ENCODE measurements at regions of chr6 and their contacts with region 1.

Region 1: GRCh38 chr6:125153391-125154117 is at the start of gene TPD52L1:
- DNase-seq: peak; percentile 60
- ATAC-seq: peak; percentile 92
- H3K4me3 ChIP-seq: peak within 1 kb of the TSS; percentile 59
- H3K27ac ChIP-seq: no peak within 1 kb of the TSS
- H3K4me1 ChIP-seq: peaks cover 4% of the 10 kb centered on the region
- H3K27me3 ChIP-seq: no peaks in the 10 kb centered on the region
- CTCF ChIP-seq: peak; percentile 66
- POLR2A ChIP-seq: no peak
- RAD21 ChIP-seq: peak; percentile 64
- total RNA-seq, gene TPD52L1: 10.2 and 10.8 TPM in 2 replicates

Region 2: DNA sequence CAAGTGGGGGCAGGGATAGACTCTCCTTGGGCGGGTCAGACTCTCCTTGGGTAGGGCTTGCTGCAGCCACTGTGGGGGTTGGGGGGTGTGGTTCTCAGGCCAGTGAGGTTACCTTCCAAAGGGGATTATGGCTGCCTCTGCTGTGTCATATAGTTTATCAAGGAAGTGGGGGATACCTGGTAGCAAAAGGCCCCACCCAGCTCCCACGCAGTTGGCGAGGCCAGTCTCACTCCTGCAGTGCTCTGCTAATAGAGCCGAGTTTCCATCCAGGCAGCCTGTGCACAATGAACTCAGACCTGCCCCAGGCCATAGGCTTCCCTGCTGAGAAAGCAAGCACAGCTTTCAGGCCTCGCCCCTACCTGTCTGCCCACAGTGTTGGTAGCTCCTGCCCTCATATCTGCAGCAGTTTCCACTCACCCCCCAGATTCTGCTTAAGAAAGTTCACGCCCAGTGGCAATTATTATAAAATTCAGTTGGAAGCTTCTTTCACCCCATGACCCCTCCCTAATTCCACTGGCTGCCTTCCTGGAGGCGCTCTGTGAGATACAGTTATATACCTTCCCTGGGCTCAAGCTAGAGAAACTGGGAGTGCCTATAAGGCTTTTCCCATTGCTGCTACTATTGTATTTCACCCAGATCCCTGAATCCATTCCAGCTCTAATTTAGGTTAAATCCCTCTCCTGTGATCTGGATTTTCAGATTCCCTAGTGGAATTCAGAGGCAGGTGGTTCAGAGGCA is 92.1 kb after region 1 on chr6:
- CTCF ChIA-PET with region 1: no interaction called
- POLR2A ChIA-PET with region 1: no interaction called
- dilution Hi-C with region 1: no loop called
- in situ Hi-C with region 1: no loop called
- intact Hi-C with region 1: no loop called
- DNase-seq: no peak
- ATAC-seq: no peak
- H3K4me3 ChIP-seq: no peak overlapping the region
- H3K27ac ChIP-seq: no peak overlapping the region
- H3K4me1 ChIP-seq: no peaks in the 10 kb centered on the region
- H3K27me3 ChIP-seq: no peaks in the 10 kb centered on the region
- CTCF ChIP-seq: no peak
- POLR2A ChIP-seq: no peak
- RAD21 ChIP-seq: no peak

Region 3: DNA sequence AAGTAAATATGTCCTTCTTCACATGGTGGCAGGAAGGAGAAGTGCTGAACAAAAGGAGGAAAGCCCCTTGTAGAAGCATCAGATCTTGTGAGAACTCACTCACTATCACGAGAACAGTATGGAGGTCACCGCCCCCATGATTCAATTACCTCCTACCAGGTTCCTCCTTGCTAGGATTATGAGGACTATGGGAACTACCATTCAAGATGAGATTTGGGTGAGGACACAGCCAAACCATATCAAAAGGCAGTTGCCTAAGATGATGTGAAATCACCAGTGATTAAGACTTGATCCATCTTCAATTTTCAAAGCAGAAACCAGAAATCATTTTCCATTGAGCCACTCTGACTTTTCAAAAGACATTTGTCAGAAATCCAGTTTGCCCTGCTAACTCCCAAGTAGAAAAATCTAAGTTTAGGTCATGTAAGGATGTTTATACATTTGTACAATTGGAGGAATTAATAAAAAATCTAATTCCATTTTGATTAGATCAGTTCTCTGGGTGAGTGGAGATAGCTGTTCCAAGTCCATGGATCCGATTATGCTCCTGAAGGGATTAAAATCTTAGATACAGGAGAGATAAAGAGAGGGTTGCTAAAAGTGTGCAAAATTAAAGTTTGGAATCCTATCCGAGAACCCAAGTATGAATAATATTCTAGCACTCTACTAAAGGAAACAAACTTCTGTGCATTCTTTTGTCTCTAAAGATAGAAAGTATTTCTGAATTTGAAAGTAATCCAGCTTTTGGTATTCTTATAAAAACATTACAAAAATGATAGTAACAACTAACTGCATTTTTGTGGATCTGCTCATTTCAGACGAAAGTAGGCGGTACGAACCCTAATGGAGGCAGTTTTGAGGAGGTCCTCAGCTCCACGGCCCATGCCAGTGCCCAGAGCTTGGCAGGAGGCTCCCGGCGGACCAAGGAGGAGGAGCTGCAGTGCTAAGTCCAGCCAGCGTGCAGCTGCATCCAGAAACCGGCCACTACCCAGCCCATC is 108.8 kb after region 1 on chr6:
- CTCF ChIA-PET with region 1: no interaction called
- POLR2A ChIA-PET with region 1: no interaction called
- dilution Hi-C with region 1: no loop called
- in situ Hi-C with region 1: no loop called
- intact Hi-C with region 1: loop called (anchors 1 kb)
- DNase-seq: peak; percentile 84
- ATAC-seq: peak; percentile 88
- H3K4me3 ChIP-seq: peak overlapping the region; percentile 26; the same call in 1 of the 2 replicates
- H3K27ac ChIP-seq: peak overlapping the region; percentile 93
- H3K4me1 ChIP-seq: peaks cover 6% of the 10 kb centered on the region
- H3K27me3 ChIP-seq: no peaks in the 10 kb centered on the region
- CTCF ChIP-seq: no peak
- POLR2A ChIP-seq: no peak
- RAD21 ChIP-seq: no peak

Region 4: GRCh38 chr6:125301435-125302391 is 148.2 kb after region 1 on chr6 and contains the start of gene HDDC2:
- CTCF ChIA-PET with region 1: no interaction called
- POLR2A ChIA-PET with region 1: no interaction called
- dilution Hi-C with region 1: no loop called
- in situ Hi-C with region 1: loop called (anchors 10 kb)
- intact Hi-C with region 1: loop called (anchors 1 kb)
- DNase-seq: peak; percentile 73
- ATAC-seq: peak; percentile 84
- H3K4me3 ChIP-seq: peak within 1 kb of the TSS; percentile 84
- H3K27ac ChIP-seq: peak within 1 kb of the TSS; percentile 98
- H3K4me1 ChIP-seq: peaks cover 4% of the 10 kb centered on the region
- H3K27me3 ChIP-seq: no peaks in the 10 kb centered on the region
- CTCF ChIP-seq: no peak
- POLR2A ChIP-seq: peak; percentile 55; the same call in 1 of the 2 replicates
- RAD21 ChIP-seq: no peak
- total RNA-seq, gene HDDC2: 40.9 and 51.4 TPM in 2 replicates

Region 5: DNA sequence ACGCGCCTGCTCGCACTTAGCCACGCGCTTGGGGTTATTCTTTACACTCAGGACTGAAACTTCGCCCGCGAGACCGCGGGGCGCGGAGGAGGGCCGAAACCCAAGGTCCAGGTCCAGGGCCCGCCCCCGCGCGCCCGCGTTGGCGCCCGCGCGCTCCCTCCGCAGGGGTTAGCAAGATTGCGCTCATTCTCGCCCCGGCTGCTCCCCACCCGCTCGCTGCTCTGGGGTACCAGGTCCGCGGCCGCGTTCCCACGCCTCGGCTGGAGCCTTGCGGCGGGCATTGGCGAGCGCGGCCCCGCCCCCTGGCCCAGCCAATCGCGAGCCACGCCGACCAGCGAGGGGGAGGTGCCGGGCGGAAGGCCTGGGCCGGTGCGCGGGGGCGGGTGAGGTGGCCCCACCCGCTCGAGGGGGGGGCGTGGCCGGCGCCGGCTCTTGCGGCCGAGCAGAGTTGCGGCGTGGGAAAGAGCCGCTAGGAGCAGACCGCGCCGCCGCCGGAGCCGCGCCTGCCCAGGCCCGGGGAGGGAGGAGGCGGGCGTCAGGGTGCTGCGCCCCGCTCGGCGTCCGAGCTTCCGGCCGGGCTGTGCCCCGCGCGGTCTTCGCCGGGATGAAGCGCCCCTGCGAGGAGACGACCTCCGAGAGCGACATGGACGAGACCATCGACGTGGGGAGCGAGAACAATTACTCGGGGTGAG is 595.8 kb after region 1 on chr6 and contains the start of gene HEY2:
- CTCF ChIA-PET with region 1: no interaction called
- POLR2A ChIA-PET with region 1: no interaction called
- dilution Hi-C with region 1: no loop called
- in situ Hi-C with region 1: loop called (anchors 25 kb)
- intact Hi-C with region 1: no loop called
- DNase-seq: peak; percentile 81
- ATAC-seq: peak; percentile 99
- H3K4me3 ChIP-seq: peak within 1 kb of the TSS; percentile 60
- H3K27ac ChIP-seq: no peak within 1 kb of the TSS
- H3K4me1 ChIP-seq: peaks cover 10% of the 10 kb centered on the region
- H3K27me3 ChIP-seq: peaks cover 64% of the 10 kb centered on the region
- CTCF ChIP-seq: no peak
- POLR2A ChIP-seq: no peak
- RAD21 ChIP-seq: no peak
- total RNA-seq, gene HEY2: not detected in 2 replicates

Region 6: GRCh38 chr6:125765944-125766343 is 612.4 kb after region 1 on chr6:
- CTCF ChIA-PET with region 1: no interaction called
- POLR2A ChIA-PET with region 1: no interaction called
- dilution Hi-C with region 1: no loop called
- in situ Hi-C with region 1: loop called (anchors 25 kb)
- intact Hi-C with region 1: loop called (anchors 5 kb)
- DNase-seq: no peak
- ATAC-seq: no peak
- H3K4me3 ChIP-seq: no peak overlapping the region
- H3K27ac ChIP-seq: no peak overlapping the region
- H3K4me1 ChIP-seq: no peaks in the 10 kb centered on the region
- H3K27me3 ChIP-seq: peaks cover 17% of the 10 kb centered on the region
- CTCF ChIP-seq: no peak
- POLR2A ChIP-seq: no peak
- RAD21 ChIP-seq: no peak

Measured in IMR-90 (cell line).